HepG2 (cell line): ENCODE measurements at regions of chr20 and their contacts with region 1.

Region 1: GRCh38 chr20:52083627-52084232 is 107.8 kb downstream of the ZFP64 start:
- DNase-seq: peak; percentile 73
- ATAC-seq: peak; percentile 90
- H3K4me3 ChIP-seq: no peak overlapping the region
- H3K27ac ChIP-seq: no peak overlapping the region
- H3K4me1 ChIP-seq: peaks cover 12% of the 10 kb centered on the region; the same call in 1 of the 2 replicates
- H3K27me3 ChIP-seq: no peaks in the 10 kb centered on the region
- CTCF ChIP-seq: peak; percentile 95
- EP300 ChIP-seq: no peak
- POLR2A ChIP-seq: no peak
- RAD21 ChIP-seq: peak; percentile 94

Region 2: DNA sequence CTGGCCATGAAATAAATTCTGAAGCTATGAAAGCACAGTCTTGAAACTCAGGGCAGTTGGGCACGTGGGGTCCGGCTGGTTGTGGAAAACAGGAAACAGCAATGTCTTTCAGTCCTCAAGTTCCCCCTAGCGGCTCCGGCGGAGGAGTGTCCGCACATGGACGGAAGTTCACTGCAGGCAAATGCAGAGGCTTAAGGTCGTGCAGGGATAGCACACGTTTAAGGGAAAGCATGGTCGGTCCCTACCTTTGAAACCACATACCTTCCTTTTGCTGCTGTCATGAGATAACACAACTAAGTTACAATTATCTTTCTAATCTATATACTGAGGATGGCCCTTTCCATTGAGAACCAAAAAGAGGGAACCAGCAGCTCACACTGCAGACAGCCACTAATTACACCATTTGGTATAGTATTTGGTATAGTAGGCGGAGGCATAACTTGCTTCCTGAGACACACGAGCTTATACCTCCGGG is 488.6 kb before region 1 on chr20:
- CTCF ChIA-PET with region 1: no interaction called
- POLR2A ChIA-PET with region 1: no interaction called
- in situ Hi-C with region 1: no loop called
- intact Hi-C with region 1: loop called (anchors 1 kb)
- DNase-seq: peak; percentile 88
- ATAC-seq: peak; percentile 98
- H3K4me3 ChIP-seq: no peak overlapping the region
- H3K27ac ChIP-seq: no peak overlapping the region
- H3K4me1 ChIP-seq: peaks cover 13% of the 10 kb centered on the region
- H3K27me3 ChIP-seq: no peaks in the 10 kb centered on the region
- CTCF ChIP-seq: peak; percentile 99
- EP300 ChIP-seq: no peak
- POLR2A ChIP-seq: no peak
- RAD21 ChIP-seq: peak; percentile 98

Region 3: DNA sequence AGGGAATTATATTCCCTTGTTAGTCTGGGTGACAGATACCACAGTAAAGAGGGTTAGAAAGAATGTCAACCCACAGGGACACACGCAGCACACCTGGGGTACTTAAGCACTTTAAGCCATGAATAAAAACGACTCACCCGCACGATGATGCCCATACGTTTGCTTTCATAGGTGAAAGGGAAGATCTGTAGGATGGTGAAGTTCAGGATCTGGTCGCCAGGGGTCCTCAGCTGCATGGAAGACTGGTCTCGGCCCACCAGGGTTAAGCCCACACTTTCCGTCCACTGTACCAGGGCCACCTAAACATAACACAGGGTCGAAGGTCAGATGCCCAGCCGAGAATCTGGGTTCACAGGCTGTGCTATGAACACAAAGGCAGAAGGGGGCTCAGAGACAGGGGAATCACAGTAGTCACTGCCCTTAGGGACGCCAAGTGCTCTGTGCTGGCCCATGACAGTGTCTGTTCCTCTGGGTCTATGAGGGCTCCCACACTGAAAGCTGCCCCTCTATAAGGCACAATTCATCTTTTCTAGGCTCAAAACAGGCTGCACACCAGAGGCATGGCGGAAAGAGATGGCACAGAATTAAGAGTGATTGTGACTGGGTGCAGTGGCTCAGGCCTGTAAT is 444.4 kb before region 1 on chr20:
- CTCF ChIA-PET with region 1: interaction called, 42 read pairs
- POLR2A ChIA-PET with region 1: no interaction called
- in situ Hi-C with region 1: loop called (anchors 5 kb)
- intact Hi-C with region 1: loop called (anchors 1 kb)
- DNase-seq: peak; percentile 75
- ATAC-seq: peak; percentile 93
- H3K4me3 ChIP-seq: no peak overlapping the region
- H3K27ac ChIP-seq: no peak overlapping the region
- H3K4me1 ChIP-seq: peaks cover 7% of the 10 kb centered on the region; the same call in 1 of the 2 replicates
- H3K27me3 ChIP-seq: no peaks in the 10 kb centered on the region
- CTCF ChIP-seq: peak; percentile 100
- EP300 ChIP-seq: no peak
- POLR2A ChIP-seq: no peak
- RAD21 ChIP-seq: peak; percentile 98

Region 4: DNA sequence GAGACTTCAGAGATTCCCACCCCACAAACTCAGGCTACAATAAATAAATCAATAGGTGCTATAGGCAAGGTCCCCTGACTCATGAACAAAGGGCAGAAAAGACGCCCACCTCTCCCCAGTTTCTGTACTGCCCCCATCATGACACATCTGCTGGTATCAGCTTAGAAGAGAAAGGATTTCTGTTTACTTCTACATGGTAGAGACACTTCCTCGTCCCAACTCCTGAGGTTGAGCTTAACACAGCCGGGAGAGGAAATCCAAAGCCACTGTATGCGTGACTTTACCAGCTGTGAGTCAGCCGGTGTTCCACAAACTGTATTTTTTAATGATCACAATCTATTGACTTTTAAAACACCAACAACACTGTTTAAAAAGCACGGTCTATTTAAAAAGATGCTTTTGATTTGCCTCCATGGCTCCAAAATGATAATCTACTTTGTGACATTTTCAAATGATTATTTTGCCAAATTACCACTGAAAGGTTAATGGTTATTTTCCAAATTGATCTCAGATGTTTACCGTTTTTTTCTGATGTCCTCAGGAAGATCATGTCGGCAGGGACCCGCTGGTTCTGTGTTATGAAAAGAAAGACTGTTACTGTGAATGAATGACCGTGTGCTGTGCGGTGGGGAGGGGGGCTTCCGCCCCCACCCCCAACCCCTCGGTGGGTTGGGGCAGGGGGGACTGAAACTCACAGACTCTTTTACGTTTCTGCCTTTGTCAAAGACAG is 388.0 kb before region 1 on chr20:
- CTCF ChIA-PET with region 1: interaction called, 18 read pairs
- POLR2A ChIA-PET with region 1: no interaction called
- in situ Hi-C with region 1: no loop called
- intact Hi-C with region 1: no loop called
- DNase-seq: peak; percentile 33
- ATAC-seq: peak; percentile 34; the same call in 1 of the 3 replicates
- H3K4me3 ChIP-seq: no peak overlapping the region
- H3K27ac ChIP-seq: no peak overlapping the region
- H3K4me1 ChIP-seq: peaks cover 52% of the 10 kb centered on the region
- H3K27me3 ChIP-seq: no peaks in the 10 kb centered on the region
- CTCF ChIP-seq: no peak
- EP300 ChIP-seq: no peak
- POLR2A ChIP-seq: no peak
- RAD21 ChIP-seq: no peak

Region 5: DNA sequence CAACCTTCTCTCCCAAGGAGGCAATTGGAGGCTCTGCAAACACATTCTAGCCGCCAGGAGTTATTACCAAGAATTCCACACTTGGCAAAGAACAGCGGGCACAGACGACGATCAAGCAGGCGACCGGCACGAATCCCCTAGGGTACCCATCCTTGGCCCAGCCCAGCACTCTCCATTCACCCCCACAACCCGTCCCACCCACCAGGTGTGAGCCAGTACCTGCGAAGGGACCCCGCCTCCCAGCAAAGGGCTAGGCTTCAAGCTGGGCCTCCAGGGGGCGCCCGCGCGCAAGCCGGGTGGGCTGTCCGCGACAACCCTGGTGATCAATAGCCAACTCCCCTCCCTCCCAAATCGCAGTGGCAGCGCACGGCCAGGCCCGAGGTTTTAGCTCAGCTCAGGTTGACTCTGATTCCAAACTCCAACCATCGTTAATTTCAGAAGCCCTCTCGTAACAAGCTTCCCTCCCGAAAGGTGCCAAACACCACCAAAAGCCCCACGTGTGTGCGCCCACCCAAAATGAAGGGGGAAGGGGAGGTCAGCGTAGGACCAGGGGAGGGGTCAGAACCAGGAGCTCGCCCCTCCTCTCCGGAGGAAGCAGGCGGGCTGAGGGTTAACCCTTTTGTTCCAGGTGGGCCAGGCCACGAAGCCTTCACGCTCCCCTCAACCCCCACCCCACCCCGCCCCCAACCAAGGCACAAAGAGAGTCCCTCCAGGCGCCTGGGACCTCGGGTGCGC is 283.5 kb before region 1 on chr20:
- CTCF ChIA-PET with region 1: interaction called, 18 read pairs
- POLR2A ChIA-PET with region 1: no interaction called
- in situ Hi-C with region 1: loop called (anchors 5 kb)
- intact Hi-C with region 1: loop called (anchors 1 kb)
- DNase-seq: peak; percentile 48
- ATAC-seq: peak; percentile 95
- H3K4me3 ChIP-seq: peak overlapping the region; percentile 55 to 78 (median 60)
- H3K27ac ChIP-seq: no peak overlapping the region
- H3K4me1 ChIP-seq: peaks cover 44% of the 10 kb centered on the region
- H3K27me3 ChIP-seq: peaks cover 2 to 49% of the 10 kb centered on the region in 2 experiments; a peak in 3 of 5 replicates
- CTCF ChIP-seq: peak; percentile 100
- EP300 ChIP-seq: no peak
- POLR2A ChIP-seq: no peak
- RAD21 ChIP-seq: peak; percentile 96

Region 6: GRCh38 chr20:51966291-51966971 is 117.3 kb before region 1 on chr20:
- CTCF ChIA-PET with region 1: interaction called, 7 read pairs
- POLR2A ChIA-PET with region 1: no interaction called
- in situ Hi-C with region 1: no loop called
- intact Hi-C with region 1: loop called (anchors 2 kb)
- DNase-seq: peak; percentile 84
- ATAC-seq: peak; percentile 96
- H3K4me3 ChIP-seq: no peak overlapping the region
- H3K27ac ChIP-seq: no peak overlapping the region
- H3K4me1 ChIP-seq: peaks cover 20% of the 10 kb centered on the region
- H3K27me3 ChIP-seq: peaks cover 0 to 6% of the 10 kb centered on the region in 2 experiments; a peak in 1 of 5 replicates
- CTCF ChIP-seq: peak; percentile 88
- EP300 ChIP-seq: no peak
- POLR2A ChIP-seq: no peak
- RAD21 ChIP-seq: peak; percentile 65; the same call in 1 of the 2 replicates

Region 7: GRCh38 chr20:52060794-52061714 is 22.7 kb before region 1 on chr20:
- CTCF ChIA-PET with region 1: no interaction called
- POLR2A ChIA-PET with region 1: no interaction called
- in situ Hi-C with region 1: no loop called
- intact Hi-C with region 1: no loop called
- DNase-seq: peak; percentile 71
- ATAC-seq: peak; percentile 96
- H3K4me3 ChIP-seq: no peak overlapping the region; a peak in 1 of 6 replicates
- H3K27ac ChIP-seq: no peak overlapping the region
- H3K4me1 ChIP-seq: peaks cover 9% of the 10 kb centered on the region; the same call in 1 of the 2 replicates
- H3K27me3 ChIP-seq: no peaks in the 10 kb centered on the region
- CTCF ChIP-seq: peak; percentile 94
- EP300 ChIP-seq: no peak
- POLR2A ChIP-seq: no peak
- RAD21 ChIP-seq: peak; percentile 82

Region 8: DNA sequence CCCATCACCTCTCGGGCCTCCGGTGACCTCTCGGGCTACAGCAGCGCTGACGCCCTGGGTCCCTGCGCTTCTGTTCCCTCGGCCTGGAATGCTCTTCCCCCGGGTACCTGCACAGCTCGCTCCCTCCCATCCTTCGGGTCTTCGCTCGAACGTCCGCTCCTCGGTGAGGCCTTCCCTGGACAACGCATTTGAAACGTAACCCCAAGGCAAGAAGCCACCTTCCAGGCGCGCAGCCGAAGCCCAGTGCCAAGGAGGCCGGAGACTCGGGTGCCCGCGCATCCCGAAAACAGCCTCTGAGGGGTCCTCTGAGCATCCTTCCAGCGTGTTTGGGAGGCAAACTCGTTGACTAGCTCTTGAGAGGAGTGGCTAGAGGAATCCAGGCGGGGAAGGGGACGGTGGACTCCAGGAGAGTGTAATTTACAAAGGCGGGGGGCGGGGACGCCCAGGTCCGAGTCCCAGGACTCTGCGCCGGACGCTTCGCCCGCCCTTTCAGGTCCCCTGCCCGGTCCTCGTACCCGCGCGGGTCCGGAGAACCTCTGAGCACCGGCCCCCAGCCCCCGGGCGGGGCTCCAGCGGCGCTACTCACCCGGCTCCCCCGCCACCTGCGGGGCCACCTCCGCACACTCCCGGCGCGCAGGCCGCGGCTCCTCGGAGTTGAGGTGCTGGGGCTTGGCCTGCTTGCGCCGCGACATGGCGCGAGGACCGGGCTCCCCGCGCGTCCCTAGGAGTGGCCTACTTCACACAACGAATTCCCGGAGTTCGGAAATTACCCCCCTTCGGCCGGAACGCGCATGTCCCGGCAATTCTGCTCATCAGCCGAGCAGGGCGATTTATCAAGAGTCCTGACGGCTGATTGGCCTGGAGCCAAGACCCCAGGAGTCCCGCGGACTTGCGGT is 21.1 kb after region 1 on chr20:
- CTCF ChIA-PET with region 1: no interaction called
- POLR2A ChIA-PET with region 1: no interaction called
- in situ Hi-C with region 1: no loop called
- intact Hi-C with region 1: no loop called
- DNase-seq: no peak
- ATAC-seq: no peak
- H3K4me3 ChIP-seq: no peak overlapping the region
- H3K27ac ChIP-seq: no peak overlapping the region
- H3K4me1 ChIP-seq: no peaks in the 10 kb centered on the region
- H3K27me3 ChIP-seq: no peaks in the 10 kb centered on the region
- CTCF ChIP-seq: no peak
- EP300 ChIP-seq: no peak
- POLR2A ChIP-seq: no peak
- RAD21 ChIP-seq: no peak